ENCODE measurements at regions of chr7 and their contacts with region 1.

Region 1: DNA sequence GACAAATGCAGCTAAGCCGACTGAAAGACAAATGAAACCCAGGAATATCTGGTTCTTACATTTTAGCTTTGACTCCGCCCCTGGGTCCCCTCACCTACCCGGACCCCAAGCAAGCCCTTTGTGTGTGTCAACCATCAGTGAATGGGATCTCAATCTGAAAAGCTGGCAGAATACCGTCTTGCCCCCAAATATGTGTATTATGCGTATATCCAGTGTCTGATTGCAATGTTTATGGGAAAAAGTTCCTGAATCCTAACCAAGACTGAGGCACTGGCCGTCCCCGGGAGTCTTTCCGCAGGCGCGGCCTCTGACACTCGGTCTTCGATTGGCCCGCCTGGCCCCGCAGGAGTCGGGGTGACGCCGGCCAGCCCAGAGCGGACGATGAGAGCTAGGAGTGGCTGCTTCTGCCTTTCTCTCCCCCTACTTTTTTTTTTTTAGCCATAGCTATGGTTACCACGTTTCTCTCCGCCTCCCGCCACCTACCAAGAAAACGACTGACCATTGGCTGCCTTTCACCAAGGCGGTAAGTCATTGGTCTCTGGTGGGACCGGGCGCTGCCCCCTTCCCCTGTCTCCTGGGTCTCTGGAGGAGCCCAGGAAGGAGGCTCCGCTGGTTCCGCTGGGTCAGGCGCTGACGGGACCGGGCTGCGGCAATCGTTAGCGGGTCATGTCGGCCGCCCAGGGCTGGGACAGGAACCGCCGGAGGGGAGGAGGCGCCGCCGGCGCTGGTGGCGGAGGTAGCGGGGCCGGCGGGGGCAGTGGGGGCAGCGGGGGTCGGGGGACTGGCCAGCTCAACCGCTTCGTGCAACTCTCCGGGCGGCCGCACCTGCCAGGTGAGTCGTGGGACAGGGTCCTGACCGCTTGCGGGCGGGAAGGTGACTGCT is at the start of gene KLHDC10:
- DNase-seq: peak; percentile 95 to 99
- ATAC-seq: peak; percentile 98 to 100 (median 99)
- H3K4me3 ChIP-seq: peak within 1 kb of the TSS; percentile 70 to 98 (median 90)
- H3K27ac ChIP-seq: peak within 1 kb of the TSS; percentile 61 to 93 (median 86)
- H3K4me1 ChIP-seq: peaks cover 0 to 43% (median 33%) of the 10 kb centered on the region in 9 donors
- H3K27me3 ChIP-seq: no peaks in the 10 kb centered on the region
- CTCF ChIP-seq: no peak
- total RNA-seq, gene KLHDC10: 23.4 to 33.7 (median 28.6) TPM

Region 2: GRCh38 chr7:130205084-130205947 is 135.1 kb after region 1 on chr7 and contains the start of gene TMEM209:
- intact Hi-C with region 1: loop called in 1 of 10 experiments (anchors 10 kb)
- DNase-seq: peak; percentile 95 to 96
- ATAC-seq: peak; percentile 98 to 100 (median 99)
- H3K4me3 ChIP-seq: peak within 1 kb of the TSS; percentile 58 to 75 (median 74)
- H3K27ac ChIP-seq: peak within 1 kb of the TSS; percentile 18 to 94 (median 87)
- H3K4me1 ChIP-seq: peaks cover 4 to 12% (median 6%) of the 10 kb centered on the region in 9 donors
- H3K27me3 ChIP-seq: no peaks in the 10 kb centered on the region
- CTCF ChIP-seq: no peak
- total RNA-seq, gene TMEM209: 7.7 to 14.7 (median 12.6) TPM

Region 3: DNA sequence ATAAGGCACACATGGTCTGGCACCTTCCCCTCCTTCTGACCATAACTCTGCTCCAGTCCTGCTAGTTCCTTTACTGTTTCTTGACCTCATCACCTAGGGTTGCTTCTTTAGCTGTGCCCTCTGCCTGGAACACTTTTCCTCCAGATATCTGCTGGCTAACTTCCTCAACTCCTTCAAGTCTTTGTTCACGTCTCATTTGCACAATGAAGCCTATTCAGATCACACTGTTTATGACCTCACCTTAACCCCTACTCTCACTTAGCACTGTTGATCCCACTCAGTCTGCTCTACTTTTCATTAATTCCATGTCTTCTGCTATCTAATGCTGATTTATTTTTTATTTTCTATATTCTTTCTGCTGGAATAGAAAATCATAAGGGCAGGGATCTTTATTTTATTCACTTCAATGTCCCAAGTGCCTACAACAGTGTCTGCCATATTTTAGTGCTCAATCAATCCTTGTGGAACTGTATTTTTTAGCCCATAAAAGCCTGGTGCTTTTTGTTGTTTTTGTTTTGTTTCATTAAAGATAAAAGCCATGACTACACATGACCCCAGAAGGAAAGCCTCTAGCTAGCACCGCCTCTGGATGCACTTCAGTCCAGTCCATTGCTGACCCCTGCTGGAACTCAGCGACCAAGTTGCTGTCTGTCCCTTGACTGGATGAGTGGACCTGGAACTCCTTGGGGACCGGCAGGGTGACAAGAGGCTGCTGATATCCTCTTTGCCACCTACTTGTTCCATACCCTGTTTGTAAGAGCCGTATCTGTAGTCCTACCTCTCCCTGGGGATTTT is 651.5 kb after region 1 on chr7:
- intact Hi-C with region 1: loop called in 5 of 10 experiments (anchors 1 to 10 kb)
- DNase-seq: peak; percentile 70 to 82
- ATAC-seq: peak; percentile 93 to 98 (median 96)
- H3K4me3 ChIP-seq: no peak overlapping the region
- H3K27ac ChIP-seq: no peak overlapping the region
- H3K4me1 ChIP-seq: peaks cover 0 to 6% (median 0%) of the 10 kb centered on the region in 9 donors
- H3K27me3 ChIP-seq: peaks cover 0 to 28% (median 3%) of the 10 kb centered on the region in 7 donors
- CTCF ChIP-seq: peak; percentile 36 to 84 (median 73)

Region 4: GRCh38 chr7:130831817-130832481 is 761.7 kb after region 1 on chr7:
- intact Hi-C with region 1: loop called in 6 of 10 experiments (anchors 5 to 10 kb)
- DNase-seq: no peak
- ATAC-seq: no peak
- H3K4me3 ChIP-seq: no peak overlapping the region
- H3K27ac ChIP-seq: no peak overlapping the region
- H3K4me1 ChIP-seq: no peaks in the 10 kb centered on the region
- H3K27me3 ChIP-seq: no peaks in the 10 kb centered on the region
- CTCF ChIP-seq: peak; percentile 49 to 82 (median 76)

Measured in heart right ventricle (tissue), 16 donors.